ENCODE measurements at regions of chr18 and their contacts with region 1.

Region 1: GRCh38 chr18:36843784-36844183 is 14.9 kb downstream of the KIAA1328 start:
- DNase-seq: no peak
- H3K4me3 ChIP-seq: no peak overlapping the region
- CTCF ChIP-seq: no peak

Region 2: DNA sequence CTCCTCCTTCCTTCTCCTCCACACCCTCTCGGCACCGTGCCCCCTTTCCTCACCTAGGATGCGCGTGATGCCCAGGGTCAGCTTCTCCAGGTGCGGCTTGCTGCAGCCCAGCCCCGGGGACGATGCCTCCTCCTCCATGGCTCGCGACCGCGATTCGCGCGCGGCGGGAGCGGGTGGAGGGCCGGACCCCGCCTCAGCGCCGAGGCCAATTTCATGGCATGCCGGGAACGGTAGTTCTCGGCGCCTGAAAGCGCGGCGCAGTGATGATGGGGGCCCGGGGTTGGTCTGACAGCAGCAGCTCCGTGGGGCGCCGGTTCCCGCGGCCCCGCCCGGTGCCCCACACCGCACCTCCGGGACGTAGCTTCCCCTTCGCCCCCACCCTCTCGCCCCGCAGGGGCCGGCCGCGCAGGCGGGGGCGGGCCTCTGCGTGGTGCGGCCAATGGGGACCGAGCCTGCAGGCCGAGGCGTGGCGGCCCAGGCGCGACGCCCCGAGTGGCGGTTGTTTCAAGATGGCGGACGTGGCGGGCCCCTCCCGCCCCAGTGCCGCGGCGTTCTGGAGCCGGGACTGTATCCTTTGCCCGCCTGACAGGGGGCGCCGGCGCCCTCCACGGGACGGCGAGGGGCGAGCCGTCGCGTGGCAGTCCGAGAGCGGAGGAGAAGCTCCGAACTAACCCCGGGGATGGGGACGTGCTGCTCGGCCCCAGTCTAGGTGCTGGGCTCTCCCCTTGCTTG is 15.0 kb before region 1 on chr18 and contains the starts of genes KIAA1328 and TPGS2:
- CTCF ChIA-PET with region 1: interaction called, 13 read pairs
- POLR2A ChIA-PET with region 1: no interaction called
- DNase-seq: no peak
- H3K4me3 ChIP-seq: peak within 1 kb of the TSS; percentile 98
- CTCF ChIP-seq: peak; percentile 75

Region 3: GRCh38 chr18:36872329-36872728 is 28.5 kb after region 1 on chr18:
- CTCF ChIA-PET with region 1: no interaction called
- POLR2A ChIA-PET with region 1: no interaction called
- DNase-seq: no peak
- H3K4me3 ChIP-seq: no peak overlapping the region
- CTCF ChIP-seq: no peak